Dendritic cell treated with granulocyte-macrophage colony-stimulating factor and Interleukin-4, amounts not matched to agents 40 ng/mL and 50 ng/mL, for 4 days (primary cell): ENCODE measurements at regions of chr6 and their contacts with region 1.

Region 1: GRCh38 chr6:38871741-38872568 is 156.8 kb downstream of the DNAH8 start:
- H3K4me3 Mint-ChIP-seq: no peak overlapping the region
- H3K27ac Mint-ChIP-seq: no peak overlapping the region
- H3K4me1 Mint-ChIP-seq: peaks cover 10% of the 10 kb centered on the region
- H3K27me3 Mint-ChIP-seq: peaks cover 5% of the 10 kb centered on the region

Region 2: GRCh38 chr6:38933432-38933831 is 61.5 kb after region 1 on chr6:
- intact Hi-C with region 1: loop called (anchors 2 kb)
- H3K4me3 Mint-ChIP-seq: no peak overlapping the region
- H3K27ac Mint-ChIP-seq: no peak overlapping the region
- H3K4me1 Mint-ChIP-seq: no peaks in the 10 kb centered on the region
- H3K27me3 Mint-ChIP-seq: peaks cover 5% of the 10 kb centered on the region

Region 3: GRCh38 chr6:39309942-39310531 is 438.1 kb after region 1 on chr6:
- intact Hi-C with region 1: loop called (anchors 1 kb)
- H3K4me3 Mint-ChIP-seq: no peak overlapping the region
- H3K27ac Mint-ChIP-seq: no peak overlapping the region
- H3K4me1 Mint-ChIP-seq: peaks cover 21% of the 10 kb centered on the region
- H3K27me3 Mint-ChIP-seq: peaks cover 53% of the 10 kb centered on the region